MCF 10A (cell line): ENCODE measurements at regions of chr2 and their contacts with region 1.

Region 1: DNA sequence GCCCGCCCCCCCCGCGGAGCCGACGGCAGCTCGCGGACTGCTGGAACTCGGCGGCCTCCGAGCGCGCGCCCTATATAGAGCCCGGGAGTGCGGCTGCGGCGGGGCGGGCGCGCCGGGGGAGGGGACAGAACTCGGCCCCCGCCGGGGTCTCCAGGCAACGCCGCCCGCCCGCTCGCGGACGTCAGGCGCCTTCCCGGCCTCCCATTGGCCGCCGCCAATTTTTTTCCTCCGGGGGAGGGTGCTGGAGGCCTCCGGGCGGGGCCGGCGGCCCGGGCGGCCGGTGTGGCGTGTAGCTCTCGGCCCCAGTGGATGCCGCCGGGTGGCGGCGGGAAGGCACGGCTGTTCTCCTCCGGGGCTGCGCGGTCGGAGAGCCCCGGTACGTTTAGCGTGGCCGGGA is at the start of gene ZFP36L2:
- DNase-seq: peak; percentile 95
- H3K4me3 Mint-ChIP-seq: peak within 1 kb of the TSS; percentile 93
- H3K27ac Mint-ChIP-seq: peak within 1 kb of the TSS; percentile 83
- H3K4me1 Mint-ChIP-seq: peaks cover 17% of the 10 kb centered on the region
- H3K27me3 Mint-ChIP-seq: no peaks in the 10 kb centered on the region
- CTCF ChIP-seq: no peak
- total RNA-seq, gene ZFP36L2: 107 and 162 TPM in 2 replicates

Region 2: DNA sequence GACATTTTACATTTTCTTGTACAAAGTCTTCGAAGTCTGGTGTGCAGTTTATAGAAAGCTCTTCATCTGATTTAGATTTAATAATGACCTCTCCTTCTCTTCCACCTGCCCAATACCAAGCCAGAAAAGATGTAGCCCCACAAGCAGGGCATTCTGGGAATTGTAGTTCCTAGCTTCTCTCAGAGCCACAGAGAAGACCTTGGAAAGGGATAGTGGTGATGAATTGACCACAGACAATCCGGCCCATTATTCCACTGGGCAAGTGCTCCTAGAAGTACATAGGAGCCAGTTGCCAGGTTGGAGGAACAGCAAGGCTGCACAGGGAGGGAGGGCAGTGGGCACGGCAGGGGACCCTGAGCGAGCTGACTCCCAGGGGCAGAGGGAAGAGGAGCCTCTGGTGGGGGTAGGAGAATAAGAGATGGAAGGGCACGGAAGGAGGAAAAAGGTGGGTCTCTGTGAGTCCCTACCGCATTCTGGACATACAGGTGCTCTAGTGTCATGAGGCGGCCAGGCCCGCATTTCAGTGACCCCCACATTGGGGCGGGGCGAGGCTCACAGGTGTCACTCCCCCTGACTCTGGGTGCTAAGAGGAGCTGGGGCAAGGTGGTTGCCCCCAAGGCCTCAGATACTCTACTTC is 281.7 kb before region 1 on chr2:
- CTCF ChIA-PET with region 1: interaction called, 106 read pairs
- POLR2A ChIA-PET with region 1: interaction called, 18 read pairs
- intact Hi-C with region 1: loop called (anchors 1 kb)
- DNase-seq: no peak
- H3K4me3 Mint-ChIP-seq: no peak overlapping the region
- H3K27ac Mint-ChIP-seq: no peak overlapping the region
- H3K4me1 Mint-ChIP-seq: peaks cover 10% of the 10 kb centered on the region
- H3K27me3 Mint-ChIP-seq: no peaks in the 10 kb centered on the region
- CTCF ChIP-seq: no peak

Region 3: DNA sequence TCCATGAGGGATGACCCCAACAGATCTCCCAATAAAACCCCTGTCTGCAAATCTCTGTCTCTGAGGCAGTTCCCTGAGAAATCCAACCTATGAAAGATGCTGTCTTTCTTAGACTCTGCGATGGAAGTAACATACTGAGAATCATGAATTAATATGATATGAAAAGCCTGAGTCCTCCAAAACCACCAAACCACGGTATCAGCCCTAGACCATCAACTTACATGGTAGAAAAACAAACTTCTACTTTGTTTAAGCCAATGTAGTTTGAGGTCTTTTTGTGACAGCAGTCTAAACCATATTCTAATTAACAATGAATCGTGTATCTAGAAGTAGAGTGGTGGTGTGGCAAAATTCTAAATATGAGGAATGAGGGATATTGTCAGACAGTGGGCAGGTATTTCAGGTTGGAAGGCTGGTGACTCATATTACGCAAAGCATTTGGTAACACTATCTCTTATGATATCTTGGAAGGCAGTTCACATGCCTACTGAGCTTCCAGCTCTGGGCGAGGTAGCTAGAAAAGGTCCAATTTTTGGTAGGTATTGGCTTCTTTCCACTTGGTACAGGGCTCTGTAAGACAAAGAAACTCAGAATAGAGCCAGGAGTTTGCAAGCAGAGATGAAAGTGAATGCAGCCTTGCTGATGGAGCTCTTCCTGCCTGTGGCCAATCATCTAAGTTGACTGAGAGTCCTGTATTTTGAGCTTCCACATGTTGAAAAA is 216.0 kb before region 1 on chr2:
- CTCF ChIA-PET with region 1: interaction called, 11 read pairs
- POLR2A ChIA-PET with region 1: interaction called, 4 read pairs
- intact Hi-C with region 1: no loop called
- DNase-seq: peak; percentile 68
- H3K4me3 Mint-ChIP-seq: no peak overlapping the region
- H3K27ac Mint-ChIP-seq: peak overlapping the region; percentile 26
- H3K4me1 Mint-ChIP-seq: peaks cover 28% of the 10 kb centered on the region
- H3K27me3 Mint-ChIP-seq: no peaks in the 10 kb centered on the region
- CTCF ChIP-seq: no peak

Region 4: DNA sequence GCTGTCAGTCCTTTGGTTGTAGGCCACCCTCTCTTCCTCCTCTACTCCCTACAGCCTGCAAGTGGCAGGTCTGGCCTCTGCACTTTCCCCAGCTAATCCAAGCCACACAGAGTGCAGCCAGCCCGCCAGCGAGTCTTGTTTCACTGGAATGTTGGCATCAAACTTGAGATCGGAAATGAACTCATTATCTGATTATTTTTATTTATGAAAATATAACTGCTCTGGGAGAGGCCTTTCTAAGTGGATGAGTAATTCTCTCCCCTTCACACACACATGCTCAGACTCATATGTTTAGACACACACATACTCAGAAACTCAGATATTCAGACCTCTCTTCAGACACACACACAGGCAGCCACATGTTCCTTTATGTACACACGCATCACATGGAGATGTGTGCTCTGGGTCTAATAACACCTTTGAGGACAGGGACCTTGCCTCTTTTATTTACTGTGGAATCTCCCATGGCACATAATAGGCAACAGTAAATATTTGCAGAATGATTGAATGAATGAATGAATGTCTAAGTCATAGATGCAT is 151.4 kb before region 1 on chr2:
- CTCF ChIA-PET with region 1: interaction called, 14 read pairs
- POLR2A ChIA-PET with region 1: interaction called, 64 read pairs
- intact Hi-C with region 1: no loop called
- DNase-seq: peak; percentile 96
- H3K4me3 Mint-ChIP-seq: peak overlapping the region; percentile 76
- H3K27ac Mint-ChIP-seq: peak overlapping the region; percentile 89
- H3K4me1 Mint-ChIP-seq: peaks cover 64% of the 10 kb centered on the region
- H3K27me3 Mint-ChIP-seq: no peaks in the 10 kb centered on the region
- CTCF ChIP-seq: no peak

Region 5: GRCh38 chr2:43178602-43179542 is 47.7 kb before region 1 on chr2:
- CTCF ChIA-PET with region 1: interaction called, 59 read pairs
- POLR2A ChIA-PET with region 1: interaction called, 329 read pairs
- intact Hi-C with region 1: loop called (anchors 2 kb)
- DNase-seq: peak; percentile 95
- H3K4me3 Mint-ChIP-seq: peak overlapping the region; percentile 39
- H3K27ac Mint-ChIP-seq: peak overlapping the region; percentile 99
- H3K4me1 Mint-ChIP-seq: peaks cover 47% of the 10 kb centered on the region
- H3K27me3 Mint-ChIP-seq: no peaks in the 10 kb centered on the region
- CTCF ChIP-seq: no peak

Region 6: DNA sequence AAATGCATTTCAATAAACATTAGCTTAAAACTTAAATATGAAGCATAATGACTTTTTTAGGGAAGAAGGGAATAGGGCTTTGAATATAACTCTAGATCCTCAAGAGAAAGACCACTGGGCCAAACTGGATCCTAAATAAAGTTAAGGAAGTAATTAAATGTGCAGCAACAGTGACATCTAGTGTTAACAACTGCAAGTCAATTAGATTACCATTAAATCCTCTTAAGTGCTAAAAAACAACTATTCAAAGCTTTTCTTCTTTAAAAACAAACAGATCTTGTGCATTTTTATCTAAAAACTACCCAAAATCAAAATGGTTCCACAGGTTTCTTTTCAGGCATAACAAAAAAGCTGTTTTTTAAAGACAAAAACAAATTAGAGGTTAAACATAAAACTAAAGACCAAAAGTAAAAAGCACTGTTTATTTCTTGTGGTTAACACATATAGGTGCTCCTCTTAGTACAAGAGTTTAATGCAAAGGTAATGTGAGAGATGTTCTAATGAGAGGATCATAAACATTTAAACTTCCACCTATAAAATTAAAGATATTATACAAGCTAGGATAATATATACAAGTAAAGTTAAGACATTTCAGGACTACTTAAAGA is 257.9 kb after region 1 on chr2:
- CTCF ChIA-PET with region 1: interaction called, 56 read pairs
- POLR2A ChIA-PET with region 1: interaction called, 89 read pairs
- intact Hi-C with region 1: loop called (anchors 1 kb)
- DNase-seq: peak; percentile 74
- H3K4me3 Mint-ChIP-seq: no peak overlapping the region
- H3K27ac Mint-ChIP-seq: peak overlapping the region; percentile 96
- H3K4me1 Mint-ChIP-seq: peaks cover 37% of the 10 kb centered on the region
- H3K27me3 Mint-ChIP-seq: no peaks in the 10 kb centered on the region
- CTCF ChIP-seq: peak; percentile 59